SK-N-SH (cell line): ENCODE measurements at regions of chr11 and their contacts with region 1.

Region 1: DNA sequence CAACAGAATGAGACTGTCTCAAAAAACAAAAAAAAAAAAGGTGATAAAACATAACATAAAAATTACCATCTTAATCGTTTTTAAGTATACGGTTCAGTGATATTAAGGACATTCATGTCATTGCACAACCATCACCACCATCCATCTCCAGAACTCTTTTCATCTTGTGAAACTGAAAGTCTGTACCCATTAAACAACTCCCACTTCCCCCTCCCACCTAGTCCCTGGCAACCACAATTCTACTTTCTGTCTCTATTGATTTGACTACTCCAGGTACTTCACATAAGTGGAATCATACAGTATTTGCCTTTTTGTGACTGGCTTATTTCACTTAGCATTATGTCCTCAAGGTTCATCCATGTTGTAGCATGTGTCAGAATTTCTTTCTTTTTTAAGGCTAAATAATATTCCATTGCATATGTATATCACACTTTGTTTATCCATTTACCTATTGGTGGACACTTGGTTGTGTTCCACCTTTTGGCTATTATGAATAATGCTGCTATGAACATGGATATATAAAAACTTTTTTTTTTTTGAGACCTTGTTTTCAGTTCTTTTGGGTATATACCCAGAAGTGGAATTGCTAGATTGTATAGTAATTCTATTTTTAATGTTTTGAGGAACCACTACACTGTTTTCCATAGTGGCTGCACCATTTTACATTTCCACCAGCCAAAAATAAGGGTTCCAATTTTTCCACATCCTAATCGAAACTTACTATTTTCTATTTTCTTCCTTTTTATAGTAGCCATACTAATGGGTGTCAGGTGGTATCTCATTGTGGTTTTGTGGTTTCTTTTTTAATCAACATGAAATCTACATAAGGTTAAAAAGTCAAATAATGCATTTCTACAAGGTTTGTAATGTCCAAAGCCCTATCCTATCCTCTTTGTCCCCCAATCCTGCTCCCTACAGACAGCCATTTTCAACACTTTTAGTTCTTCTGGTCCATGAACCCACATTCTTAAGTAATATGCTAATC is 23.4 kb upstream of the PIK3C2A start:
- DNase-seq: no peak
- H3K4me3 ChIP-seq: no peak overlapping the region
- H3K27ac ChIP-seq: no peak overlapping the region
- H3K4me1 ChIP-seq: no peaks in the 10 kb centered on the region
- H3K27me3 ChIP-seq: no peaks in the 10 kb centered on the region
- CTCF ChIP-seq: no peak
- EP300 ChIP-seq: no peak
- RAD21 ChIP-seq: no peak

Region 2: GRCh38 chr11:17077520-17078401 is 153.4 kb before region 1 on chr11 and contains the start of gene RPS13:
- CTCF ChIA-PET with region 1: no interaction called
- POLR2A ChIA-PET with region 1: no interaction called
- DNase-seq: peak; percentile 92
- H3K4me3 ChIP-seq: peak within 1 kb of the TSS; percentile 98
- H3K27ac ChIP-seq: peak within 1 kb of the TSS; percentile 79 to 87
- H3K4me1 ChIP-seq: peaks cover 7 to 18% of the 10 kb centered on the region in 2 experiments; a peak in 2 of 4 replicates
- H3K27me3 ChIP-seq: no peaks in the 10 kb centered on the region
- CTCF ChIP-seq: no peak
- EP300 ChIP-seq: peak in 1 of 2 experiments; percentile 31; a peak in 1 of 4 replicates
- RAD21 ChIP-seq: no peak
- polyA plus RNA-seq, gene RPS13: 950 and 997 TPM in 2 replicates

Region 3: DNA sequence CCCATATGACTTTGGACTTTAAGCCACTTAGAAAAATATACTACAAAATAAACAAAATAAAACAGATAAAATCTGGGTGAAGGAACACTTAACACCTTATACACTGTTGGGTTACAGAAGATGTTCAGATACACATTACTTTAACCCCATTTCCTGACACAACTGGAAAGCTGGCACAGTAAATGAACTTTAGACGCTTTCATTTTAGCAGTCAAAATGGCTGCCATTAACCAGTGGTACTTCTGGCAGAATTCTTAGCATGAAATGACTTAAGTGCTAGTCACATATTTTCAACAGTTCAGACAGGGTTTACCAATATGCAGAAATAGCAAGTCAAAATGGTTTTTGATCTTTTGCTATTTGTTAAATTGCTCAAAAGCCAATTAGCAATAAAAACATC is 61.3 kb before region 1 on chr11:
- CTCF ChIA-PET with region 1: no interaction called
- POLR2A ChIA-PET with region 1: no interaction called
- DNase-seq: no peak
- H3K4me3 ChIP-seq: no peak overlapping the region
- H3K27ac ChIP-seq: no peak overlapping the region
- H3K4me1 ChIP-seq: no peaks in the 10 kb centered on the region; a peak in 1 of 4 replicates
- H3K27me3 ChIP-seq: no peaks in the 10 kb centered on the region
- CTCF ChIP-seq: no peak
- EP300 ChIP-seq: no peak
- RAD21 ChIP-seq: no peak

Region 4: DNA sequence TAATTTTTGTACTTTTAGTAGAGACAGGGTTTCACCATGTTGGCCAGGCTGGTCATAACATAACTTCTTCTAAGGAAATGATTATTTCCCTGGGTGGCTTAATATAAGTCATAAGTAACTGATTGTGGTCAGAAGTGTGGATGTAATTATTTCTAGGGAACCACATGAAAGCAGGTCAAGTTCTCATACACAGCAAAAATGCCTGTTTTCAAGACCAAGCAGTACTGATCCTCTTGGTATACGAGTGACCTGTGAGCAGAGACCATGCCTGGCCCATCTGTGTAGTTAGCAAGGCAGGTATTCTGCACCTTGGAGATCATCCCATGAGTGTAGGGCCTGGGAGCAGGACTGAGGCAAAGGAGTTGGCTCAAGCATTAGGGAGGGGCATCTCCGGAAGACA is 12.9 kb after region 1 on chr11:
- CTCF ChIA-PET with region 1: interaction called, 18 read pairs
- POLR2A ChIA-PET with region 1: no interaction called
- DNase-seq: no peak
- H3K4me3 ChIP-seq: no peak overlapping the region
- H3K27ac ChIP-seq: no peak overlapping the region
- H3K4me1 ChIP-seq: no peaks in the 10 kb centered on the region
- H3K27me3 ChIP-seq: no peaks in the 10 kb centered on the region
- CTCF ChIP-seq: no peak
- EP300 ChIP-seq: no peak
- RAD21 ChIP-seq: no peak

Region 5: DNA sequence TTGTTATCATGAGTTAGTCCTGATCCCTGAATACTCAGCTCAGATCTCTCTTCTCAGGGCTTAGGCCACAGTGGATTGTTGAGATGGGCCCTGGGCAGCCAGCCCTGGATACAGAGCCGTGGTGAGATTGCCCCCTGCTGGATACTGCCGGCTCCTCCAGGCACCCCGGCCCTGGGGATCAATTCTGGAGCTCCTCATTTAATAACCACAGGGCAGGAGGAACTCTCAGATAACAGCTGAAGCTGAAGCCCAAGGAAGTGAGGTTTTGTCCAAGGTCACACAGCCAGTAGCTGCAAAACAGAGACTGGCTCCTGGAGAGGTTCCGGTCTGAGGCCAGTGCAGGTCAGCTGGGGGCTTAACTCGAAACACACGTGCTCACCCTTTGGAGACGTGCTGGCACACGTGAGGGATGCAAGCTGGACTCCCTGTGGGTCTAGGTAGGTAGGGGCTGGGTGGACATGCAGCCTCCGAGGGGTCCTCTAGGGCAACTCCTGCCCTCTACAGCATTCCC is 297.1 kb after region 1 on chr11:
- CTCF ChIA-PET with region 1: interaction called, 17 read pairs
- POLR2A ChIA-PET with region 1: no interaction called
- DNase-seq: peak; percentile 88
- H3K4me3 ChIP-seq: peak overlapping the region in 1 of 2 experiments; percentile 41; a peak in 1 of 4 replicates
- H3K27ac ChIP-seq: no peak overlapping the region
- H3K4me1 ChIP-seq: peaks cover 0 to 11% of the 10 kb centered on the region in 2 experiments; a peak in 1 of 4 replicates
- H3K27me3 ChIP-seq: peaks cover 4% of the 10 kb centered on the region; the same call in 1 of the 2 replicates
- CTCF ChIP-seq: peak; percentile 84
- EP300 ChIP-seq: no peak
- RAD21 ChIP-seq: peak; percentile 77